Caki2 (cell line): ENCODE measurements at regions of chr9 and their contacts with region 1.

Region 1: DNA sequence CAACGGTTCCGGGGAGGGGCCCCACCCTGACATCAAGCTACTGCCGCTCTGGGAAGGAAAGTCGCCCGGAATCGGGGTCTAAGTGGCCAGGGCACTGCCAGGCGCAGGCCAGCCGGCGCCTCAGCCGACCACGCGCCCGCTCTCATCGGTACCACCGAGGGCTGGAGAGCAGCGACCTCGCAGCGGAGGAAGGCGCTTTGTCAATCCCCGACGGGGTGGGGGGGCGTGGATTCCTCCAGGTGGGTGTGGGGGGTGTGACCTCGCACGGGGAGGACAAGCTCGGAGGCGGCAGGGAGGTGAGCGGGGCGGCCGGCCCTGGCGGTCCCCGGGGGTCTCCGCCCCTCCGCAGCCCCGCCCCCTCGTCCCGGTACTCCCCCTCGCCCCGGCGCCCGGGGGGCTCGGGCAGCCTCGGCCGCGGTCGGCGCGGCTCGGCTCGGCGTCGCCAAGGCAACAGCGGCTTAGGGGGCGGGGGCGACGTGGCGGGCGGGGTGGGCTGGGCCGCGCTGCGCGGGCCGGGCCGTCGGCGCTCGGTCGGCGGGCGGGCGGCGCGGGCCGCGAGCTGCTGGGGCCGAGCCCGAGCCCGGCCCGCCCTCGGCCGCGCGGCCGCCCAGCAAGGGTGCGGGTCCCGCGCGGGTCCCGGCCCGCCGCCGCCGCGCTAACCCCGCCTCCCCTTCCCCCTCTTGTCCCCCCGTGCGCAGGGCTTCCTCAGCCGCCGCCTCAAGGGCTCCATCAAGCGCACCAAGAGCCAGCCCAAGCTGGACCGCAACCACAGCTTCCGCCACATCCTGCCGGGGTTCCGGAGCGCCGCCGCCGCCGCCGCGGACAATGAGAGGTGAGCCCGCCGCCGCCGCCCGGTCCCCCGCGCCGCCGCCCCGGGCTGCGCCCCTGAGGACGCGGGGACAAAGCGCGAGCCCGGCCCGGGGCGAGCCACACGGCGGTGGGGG is 47.5 kb downstream of the DAB2IP start:
- DNase-seq: no peak

Region 2: DNA sequence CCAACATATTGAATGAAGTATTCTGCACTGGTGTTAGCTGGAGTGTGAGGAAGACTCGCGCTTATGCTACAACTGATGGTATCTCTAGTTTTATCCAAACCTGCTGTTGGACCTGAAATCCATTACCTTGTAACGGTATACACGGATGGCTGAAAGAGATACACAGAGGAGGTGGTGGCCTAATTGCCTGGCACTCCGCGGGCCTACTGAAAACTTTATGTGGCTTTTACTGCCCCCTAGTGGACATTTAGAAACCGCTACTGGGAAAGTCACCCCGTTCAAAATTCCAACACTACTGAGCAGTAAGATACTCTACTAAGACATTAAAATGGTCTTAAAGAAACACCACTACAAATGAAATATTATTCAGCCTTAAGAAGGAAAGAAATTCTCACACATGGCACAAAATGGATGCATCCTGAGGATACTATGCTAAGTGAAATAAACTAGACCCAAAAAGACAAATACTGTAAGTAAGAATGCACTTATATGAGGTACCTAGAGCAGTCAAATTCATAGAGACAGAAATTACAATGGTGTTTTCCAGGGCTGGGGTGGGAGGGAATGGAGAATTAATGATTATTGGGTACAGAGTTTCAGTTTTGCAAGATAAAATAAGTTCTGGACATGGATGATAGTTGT is 293.8 kb after region 1 on chr9:
- in situ Hi-C with region 1: loop called (anchors 10 kb)
- DNase-seq: peak; percentile 52